Dendritic cell treated with granulocyte-macrophage colony-stimulating factor and Interleukin-4, amounts not matched to agents 40 ng/mL and 50 ng/mL, for 4 days (primary cell): ENCODE measurements at regions of chr17 and their contacts with region 1.

Region 1: GRCh38 chr17:20307326-20307910 is 159.9 kb downstream of the LGALS9B start:
- H3K4me3 Mint-ChIP-seq: no peak overlapping the region
- H3K27ac Mint-ChIP-seq: no peak overlapping the region
- H3K4me1 Mint-ChIP-seq: peaks cover 7% of the 10 kb centered on the region
- H3K27me3 Mint-ChIP-seq: no peaks in the 10 kb centered on the region

Region 2: GRCh38 chr17:20223808-20224332 is 83.5 kb before region 1 on chr17:
- intact Hi-C with region 1: no loop called
- H3K4me3 Mint-ChIP-seq: no peak overlapping the region
- H3K27ac Mint-ChIP-seq: peak overlapping the region; percentile 23
- H3K4me1 Mint-ChIP-seq: peaks cover 16% of the 10 kb centered on the region
- H3K27me3 Mint-ChIP-seq: no peaks in the 10 kb centered on the region

Region 3: GRCh38 chr17:20234276-20234675 is 73.1 kb before region 1 on chr17:
- intact Hi-C with region 1: loop called (anchors 5 kb)
- H3K4me3 Mint-ChIP-seq: no peak overlapping the region
- H3K27ac Mint-ChIP-seq: no peak overlapping the region
- H3K4me1 Mint-ChIP-seq: no peaks in the 10 kb centered on the region
- H3K27me3 Mint-ChIP-seq: no peaks in the 10 kb centered on the region